Naive thymus-derived CD4-positive, alpha-beta T cell (primary cell): ENCODE measurements at regions of chr10 and their contacts with region 1.

Region 1: GRCh38 chr10:8059959-8060703 is 5.6 kb downstream of the GATA3 start:
- DNase-seq: peak; percentile 17 to 79 (median 72)
- ATAC-seq: peak; percentile 45
- H3K4me3 ChIP-seq: peak overlapping the region; percentile 51
- H3K4me3 Mint-ChIP-seq: peak overlapping the region; percentile 87 to 100 (median 94)
- H3K27ac ChIP-seq: peak overlapping the region; percentile 82
- H3K27ac Mint-ChIP-seq: peak overlapping the region; percentile 88 to 99 (median 95)
- H3K4me1 ChIP-seq: peaks cover 52 to 62% of the 10 kb centered on the region in 2 donors
- H3K4me1 Mint-ChIP-seq: peaks cover 57 to 80% (median 76%) of the 10 kb centered on the region in 7 donors
- H3K27me3 ChIP-seq: no peaks in the 10 kb centered on the region
- H3K27me3 Mint-ChIP-seq: peaks cover 0 to 6% (median 0%) of the 10 kb centered on the region in 5 donors

Region 2: DNA sequence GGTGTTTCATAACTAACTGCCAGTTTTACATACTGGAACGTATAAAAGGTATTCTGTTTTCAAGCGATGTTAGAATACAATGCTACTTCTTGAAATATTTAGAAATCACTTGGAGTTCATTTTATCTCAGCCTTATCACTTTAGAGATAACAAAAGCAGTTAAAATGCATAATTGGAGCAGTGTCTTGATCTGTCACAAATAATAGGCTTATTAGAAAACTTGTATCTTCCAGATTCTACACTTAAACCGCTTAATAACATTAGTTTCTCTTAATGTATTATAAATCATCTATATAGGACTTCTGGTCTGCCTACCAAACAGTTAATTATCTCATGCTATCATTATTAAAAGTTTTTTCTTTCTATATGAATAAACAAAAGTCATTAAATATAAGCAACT is 137.4 kb before region 1 on chr10:
- CTCF ChIA-PET with region 1: no interaction called
- POLR2A ChIA-PET with region 1: no interaction called
- intact Hi-C with region 1: no loop called
- DNase-seq: no peak
- ATAC-seq: no peak
- H3K4me3 ChIP-seq: no peak overlapping the region
- H3K4me3 Mint-ChIP-seq: no peak overlapping the region
- H3K27ac ChIP-seq: no peak overlapping the region
- H3K27ac Mint-ChIP-seq: no peak overlapping the region
- H3K4me1 ChIP-seq: no peaks in the 10 kb centered on the region
- H3K4me1 Mint-ChIP-seq: peaks cover 0 to 36% (median 15%) of the 10 kb centered on the region in 7 donors
- H3K27me3 ChIP-seq: no peaks in the 10 kb centered on the region
- H3K27me3 Mint-ChIP-seq: no peaks in the 10 kb centered on the region

Region 3: DNA sequence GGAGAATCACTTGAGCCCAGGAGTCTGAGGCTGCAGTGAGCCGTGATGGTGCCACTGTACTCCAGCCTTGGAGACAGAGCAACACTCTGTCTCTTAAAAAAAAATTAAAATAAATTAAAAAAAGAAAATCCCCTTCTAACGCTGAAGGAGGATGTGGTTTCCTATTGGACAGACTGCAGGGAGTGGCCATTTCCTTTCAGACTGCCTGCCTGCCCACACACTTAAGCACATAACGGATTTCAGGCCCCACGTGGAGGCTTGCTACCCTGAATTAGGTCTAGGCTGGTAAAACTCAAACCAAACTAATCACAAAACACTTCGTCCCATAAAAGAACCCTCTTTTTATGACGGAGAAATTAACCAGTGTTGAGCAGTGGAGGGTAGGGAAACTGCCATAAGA is 28.4 kb after region 1 on chr10:
- CTCF ChIA-PET with region 1: no interaction called
- POLR2A ChIA-PET with region 1: interaction called, 5 read pairs
- intact Hi-C with region 1: loop called in 1 of 2 experiments (anchors 2 kb)
- DNase-seq: peak in 7 of 9 donors; percentile 15 to 49 (median 25)
- ATAC-seq: peak; percentile 90
- H3K4me3 ChIP-seq: no peak overlapping the region
- H3K4me3 Mint-ChIP-seq: peak overlapping the region in 3 of 10 donors; percentile 19 to 62 (median 52)
- H3K27ac ChIP-seq: no peak overlapping the region
- H3K27ac Mint-ChIP-seq: peak overlapping the region in 2 of 9 donors; percentile 51 to 76
- H3K4me1 ChIP-seq: peaks cover 11 to 19% of the 10 kb centered on the region in 2 donors
- H3K4me1 Mint-ChIP-seq: peaks cover 0 to 44% (median 21%) of the 10 kb centered on the region in 7 donors
- H3K27me3 ChIP-seq: no peaks in the 10 kb centered on the region
- H3K27me3 Mint-ChIP-seq: no peaks in the 10 kb centered on the region

Region 4: DNA sequence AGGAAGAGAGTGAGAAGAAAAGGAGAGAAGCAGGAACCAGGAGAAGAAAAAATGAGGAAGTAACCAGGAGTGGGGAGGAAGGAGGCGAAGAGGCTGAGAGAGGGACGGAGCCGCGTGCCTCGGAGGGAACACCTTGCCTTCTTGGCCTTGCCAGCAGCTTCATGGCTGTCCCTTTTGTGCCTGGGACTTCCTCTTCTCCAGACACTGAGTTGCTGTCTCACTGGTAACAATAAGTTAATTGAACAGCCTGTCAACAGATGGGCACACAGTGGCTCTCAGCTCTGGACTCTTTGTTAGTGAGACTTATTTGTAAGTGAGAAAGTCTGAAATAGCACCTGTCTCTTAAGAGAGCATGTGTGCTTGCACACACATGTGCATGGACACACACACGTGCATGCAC is 77.6 kb after region 1 on chr10:
- CTCF ChIA-PET with region 1: no interaction called
- POLR2A ChIA-PET with region 1: interaction called, 13 read pairs
- intact Hi-C with region 1: loop called (anchors 1 kb)
- DNase-seq: peak in 1 of 9 donors; percentile 25
- ATAC-seq: peak; percentile 40
- H3K4me3 ChIP-seq: peak overlapping the region; percentile 63
- H3K4me3 Mint-ChIP-seq: peak overlapping the region; percentile 84 to 95 (median 88)
- H3K27ac ChIP-seq: peak overlapping the region; percentile 72
- H3K27ac Mint-ChIP-seq: peak overlapping the region; percentile 86 to 98 (median 93)
- H3K4me1 ChIP-seq: peaks cover 3 to 18% of the 10 kb centered on the region in 2 donors
- H3K4me1 Mint-ChIP-seq: peaks cover 24 to 65% (median 39%) of the 10 kb centered on the region in 7 donors
- H3K27me3 ChIP-seq: no peaks in the 10 kb centered on the region
- H3K27me3 Mint-ChIP-seq: peaks cover 0 to 14% (median 10%) of the 10 kb centered on the region in 5 donors

Region 5: GRCh38 chr10:8183241-8183704 is 123.1 kb after region 1 on chr10:
- CTCF ChIA-PET with region 1: no interaction called
- POLR2A ChIA-PET with region 1: interaction called, 5 read pairs
- intact Hi-C with region 1: loop called in 1 of 2 experiments (anchors 1 kb)
- DNase-seq: peak in 7 of 9 donors; percentile 38 to 67 (median 57)
- ATAC-seq: peak; percentile 95
- H3K4me3 ChIP-seq: no peak overlapping the region
- H3K4me3 Mint-ChIP-seq: peak overlapping the region; percentile 14 to 82 (median 56)
- H3K27ac ChIP-seq: peak overlapping the region; percentile 44
- H3K27ac Mint-ChIP-seq: peak overlapping the region; percentile 4 to 90 (median 80)
- H3K4me1 ChIP-seq: peaks cover 14 to 20% of the 10 kb centered on the region in 2 donors
- H3K4me1 Mint-ChIP-seq: peaks cover 18 to 42% (median 37%) of the 10 kb centered on the region in 7 donors
- H3K27me3 ChIP-seq: no peaks in the 10 kb centered on the region
- H3K27me3 Mint-ChIP-seq: peaks cover 0 to 20% (median 4%) of the 10 kb centered on the region in 5 donors

Region 6: DNA sequence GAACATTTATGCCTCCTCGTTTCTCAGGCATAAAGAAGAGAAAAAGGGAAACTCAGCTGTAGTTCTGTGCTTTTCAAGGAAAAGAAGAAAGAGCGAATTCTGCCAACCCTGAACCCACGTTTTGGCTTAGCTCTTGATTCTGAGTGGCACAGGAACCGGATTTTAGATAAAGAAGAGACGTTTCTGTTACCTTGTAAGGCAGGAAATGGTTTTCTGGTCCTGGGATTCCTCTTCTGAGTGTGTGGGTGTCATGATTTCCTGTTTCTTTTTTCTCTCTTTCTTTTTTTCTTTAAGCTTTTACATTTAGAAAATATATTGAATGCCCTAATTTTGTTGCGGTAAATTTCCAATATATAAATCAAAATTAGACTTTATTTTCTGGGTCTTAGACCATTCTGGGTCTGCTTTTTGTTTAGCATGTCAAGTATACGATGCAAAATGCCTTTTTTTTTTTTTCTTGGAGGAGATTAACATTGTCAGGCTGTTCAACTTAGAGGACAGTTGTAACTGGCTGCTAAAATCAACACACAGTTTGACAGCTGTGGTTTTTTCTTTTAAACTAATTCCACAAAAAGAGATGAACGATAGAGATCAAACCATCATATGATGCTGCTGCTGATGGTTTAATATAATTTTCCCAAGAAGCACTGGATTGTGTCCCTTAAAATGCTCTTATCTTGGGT is 185.1 kb after region 1 on chr10:
- CTCF ChIA-PET with region 1: no interaction called
- POLR2A ChIA-PET with region 1: interaction called, 5 read pairs
- intact Hi-C with region 1: loop called in 1 of 2 experiments (anchors 2 kb)
- DNase-seq: peak in 7 of 9 donors; percentile 45 to 75 (median 67)
- ATAC-seq: peak; percentile 86
- H3K4me3 ChIP-seq: no peak overlapping the region
- H3K4me3 Mint-ChIP-seq: peak overlapping the region; percentile 56 to 86 (median 78)
- H3K27ac ChIP-seq: peak overlapping the region; percentile 61
- H3K27ac Mint-ChIP-seq: peak overlapping the region; percentile 80 to 96 (median 91)
- H3K4me1 ChIP-seq: peaks cover 27 to 32% of the 10 kb centered on the region in 2 donors
- H3K4me1 Mint-ChIP-seq: peaks cover 20 to 79% (median 55%) of the 10 kb centered on the region in 7 donors
- H3K27me3 ChIP-seq: no peaks in the 10 kb centered on the region
- H3K27me3 Mint-ChIP-seq: no peaks in the 10 kb centered on the region

Region 7: DNA sequence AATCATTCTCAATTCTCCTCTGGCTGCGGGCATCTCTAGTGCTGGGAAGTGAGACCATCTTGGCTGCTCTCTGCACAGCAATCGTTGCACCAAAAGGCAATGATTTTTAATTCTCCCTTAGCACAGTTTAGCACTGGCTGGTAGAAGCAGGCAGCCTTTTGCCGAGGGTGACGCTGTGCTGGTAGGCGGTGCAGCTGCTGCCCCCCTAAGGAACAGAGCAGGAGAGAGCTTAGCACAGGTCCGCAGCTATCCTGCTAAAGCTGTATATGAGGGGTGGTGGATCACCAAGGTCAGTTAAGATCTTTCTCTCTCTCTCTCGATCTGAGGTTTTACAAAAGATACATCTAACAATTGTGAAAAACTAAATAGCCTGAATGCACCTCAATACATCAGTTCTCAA is 384.5 kb after region 1 on chr10:
- CTCF ChIA-PET with region 1: interaction called, 3 read pairs
- POLR2A ChIA-PET with region 1: interaction called, 4 read pairs
- intact Hi-C with region 1: loop called in 1 of 2 experiments (anchors 1 kb)
- DNase-seq: peak in 8 of 9 donors; percentile 14 to 63 (median 44)
- ATAC-seq: peak; percentile 94
- H3K4me3 ChIP-seq: no peak overlapping the region
- H3K4me3 Mint-ChIP-seq: no peak overlapping the region
- H3K27ac ChIP-seq: no peak overlapping the region
- H3K27ac Mint-ChIP-seq: peak overlapping the region in 3 of 9 donors; percentile 23 to 70 (median 65)
- H3K4me1 ChIP-seq: peaks cover 0 to 6% of the 10 kb centered on the region in 2 donors
- H3K4me1 Mint-ChIP-seq: peaks cover 0 to 17% (median 5%) of the 10 kb centered on the region in 7 donors
- H3K27me3 ChIP-seq: peaks cover 0 to 2% of the 10 kb centered on the region in 2 donors
- H3K27me3 Mint-ChIP-seq: peaks cover 0 to 36% (median 0%) of the 10 kb centered on the region in 5 donors

Region 8: DNA sequence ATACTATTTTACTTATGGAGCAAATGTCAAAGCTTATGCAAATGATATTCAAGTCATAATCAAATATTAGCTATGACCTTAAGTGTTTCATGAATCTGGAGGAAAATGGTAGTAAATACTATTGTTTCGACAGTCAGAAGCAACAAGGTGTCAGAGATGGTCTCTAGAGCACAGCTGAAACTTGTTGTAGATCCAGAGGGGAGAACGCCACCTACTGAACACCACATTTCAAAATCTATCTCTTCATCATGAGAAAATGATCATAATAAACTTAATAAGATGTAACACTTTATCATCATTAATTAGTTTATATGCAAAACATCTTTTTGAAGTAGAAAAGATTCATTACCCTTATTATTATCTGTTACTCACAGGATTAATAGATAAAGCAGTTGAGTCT is 413.1 kb after region 1 on chr10:
- CTCF ChIA-PET with region 1: interaction called, 3 read pairs
- POLR2A ChIA-PET with region 1: no interaction called
- intact Hi-C with region 1: loop called in 1 of 2 experiments (anchors 1 kb)
- DNase-seq: peak in 7 of 9 donors; percentile 8 to 61 (median 36)
- ATAC-seq: peak; percentile 51
- H3K4me3 ChIP-seq: no peak overlapping the region
- H3K4me3 Mint-ChIP-seq: no peak overlapping the region
- H3K27ac ChIP-seq: no peak overlapping the region
- H3K27ac Mint-ChIP-seq: no peak overlapping the region
- H3K4me1 ChIP-seq: no peaks in the 10 kb centered on the region
- H3K4me1 Mint-ChIP-seq: peaks cover 0 to 3% (median 0%) of the 10 kb centered on the region in 7 donors
- H3K27me3 ChIP-seq: no peaks in the 10 kb centered on the region
- H3K27me3 Mint-ChIP-seq: peaks cover 8 to 46% (median 25%) of the 10 kb centered on the region in 5 donors